Mammary epithelial cell (primary cell): ENCODE measurements at regions of chr7 and their contacts with region 1.

Region 1: DNA sequence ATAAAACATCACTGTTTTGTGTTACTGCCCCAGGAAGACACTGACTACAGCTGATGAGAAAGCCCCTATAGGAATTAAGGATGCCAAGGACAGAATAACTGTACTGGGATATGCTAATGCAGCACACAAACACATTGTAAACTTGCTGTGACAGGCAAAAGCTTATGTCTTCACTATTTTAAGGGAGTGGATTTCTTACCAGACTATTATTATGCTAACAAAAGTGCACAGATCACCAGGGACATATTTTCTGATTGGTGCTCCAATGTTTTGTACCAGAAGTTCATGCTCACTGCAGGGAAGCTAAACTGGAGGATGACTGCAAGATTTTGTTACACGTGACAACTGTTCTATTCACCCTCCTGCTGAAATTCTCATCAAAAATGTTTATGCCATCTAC is 48.1 kb upstream of the PTPN12 start:
- DNase-seq: no peak
- H3K4me3 ChIP-seq: no peak overlapping the region
- H3K27ac ChIP-seq: no peak overlapping the region
- H3K4me1 ChIP-seq: no peaks in the 10 kb centered on the region
- H3K27me3 ChIP-seq: no peaks in the 10 kb centered on the region
- CTCF ChIP-seq: no peak

Region 2: GRCh38 chr7:77409739-77410547 is 79.0 kb before region 1 on chr7:
- CTCF ChIA-PET with region 1: no interaction called
- dilution Hi-C with region 1: loop called (anchors 5 kb)
- in situ Hi-C with region 1: no loop called
- intact Hi-C with region 1: no loop called
- DNase-seq: peak; percentile 96
- H3K4me3 ChIP-seq: no peak overlapping the region
- H3K27ac ChIP-seq: peak overlapping the region; percentile 99
- H3K4me1 ChIP-seq: peaks cover 29% of the 10 kb centered on the region
- H3K27me3 ChIP-seq: no peaks in the 10 kb centered on the region
- CTCF ChIP-seq: no peak

Region 3: GRCh38 chr7:77570330-77571011 is 81.5 kb after region 1 on chr7:
- CTCF ChIA-PET with region 1: no interaction called
- dilution Hi-C with region 1: loop called (anchors 5 kb)
- in situ Hi-C with region 1: no loop called
- intact Hi-C with region 1: no loop called
- DNase-seq: peak; percentile 57
- H3K4me3 ChIP-seq: no peak overlapping the region
- H3K27ac ChIP-seq: peak overlapping the region; percentile 33
- H3K4me1 ChIP-seq: peaks cover 25% of the 10 kb centered on the region
- H3K27me3 ChIP-seq: no peaks in the 10 kb centered on the region
- CTCF ChIP-seq: no peak